ENCODE measurements at regions of chr4 and their contacts with region 1.

Region 1: DNA sequence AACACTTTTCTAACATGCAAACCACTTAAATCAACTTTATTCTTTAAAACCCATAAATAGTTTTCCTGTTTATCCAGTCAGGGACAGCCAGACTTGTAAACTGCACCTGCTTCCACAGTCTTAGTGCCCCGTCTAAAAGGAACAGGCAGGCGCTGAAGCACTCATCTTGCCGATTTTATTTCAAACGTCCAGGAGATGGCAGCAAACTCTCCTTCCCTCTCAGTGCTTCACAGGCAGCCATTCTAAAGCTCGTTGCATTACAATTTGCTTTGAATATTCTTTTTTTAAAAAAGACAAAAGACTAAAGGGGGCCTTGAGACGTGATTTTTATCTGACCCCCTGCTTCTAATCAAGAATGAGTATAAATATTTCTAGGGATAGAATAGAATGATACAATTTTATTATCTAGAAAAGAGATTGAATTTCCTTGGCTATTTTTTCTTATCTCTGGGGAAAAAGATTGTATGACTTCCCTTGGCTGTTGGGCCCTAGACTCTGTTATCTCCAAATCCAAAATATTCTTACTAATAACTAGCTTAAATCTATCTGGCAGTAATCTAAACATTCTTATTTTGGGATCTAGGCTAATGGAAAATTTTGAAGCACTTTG is 93.6 kb upstream of the MYOZ2 start:
- DNase-seq: peak; percentile 50 to 62
- ATAC-seq: peak; percentile 93

Region 2: DNA sequence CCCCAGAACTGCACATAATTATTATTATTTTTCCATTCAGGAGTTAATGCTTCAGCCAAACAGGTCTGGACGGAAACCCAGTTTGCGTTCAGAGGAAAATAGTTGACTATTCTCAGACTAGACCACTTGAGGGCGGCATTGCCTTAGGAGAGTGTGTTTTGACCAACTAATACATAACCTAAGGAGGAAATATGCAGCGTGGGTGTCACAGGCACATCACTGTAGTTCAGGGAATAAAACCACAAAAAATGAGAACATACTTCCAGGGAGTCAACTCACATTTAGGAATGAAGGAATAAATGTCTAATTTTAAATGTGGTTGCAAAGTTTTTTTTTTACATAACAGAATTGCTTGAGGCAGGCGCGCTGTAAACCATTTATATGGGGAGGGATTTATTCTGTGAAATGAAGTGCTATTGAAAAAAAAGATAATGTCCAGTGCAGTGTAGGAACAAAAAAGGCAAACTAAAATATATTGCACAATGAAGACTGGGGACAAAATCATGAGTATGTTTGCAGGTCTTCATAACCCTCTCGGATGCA is 60.1 kb before region 1 on chr4:
- intact Hi-C with region 1: loop called in 1 of 2 experiments (anchors 10 kb)
- DNase-seq: peak; percentile 53 to 54
- ATAC-seq: peak; percentile 98

Region 3: DNA sequence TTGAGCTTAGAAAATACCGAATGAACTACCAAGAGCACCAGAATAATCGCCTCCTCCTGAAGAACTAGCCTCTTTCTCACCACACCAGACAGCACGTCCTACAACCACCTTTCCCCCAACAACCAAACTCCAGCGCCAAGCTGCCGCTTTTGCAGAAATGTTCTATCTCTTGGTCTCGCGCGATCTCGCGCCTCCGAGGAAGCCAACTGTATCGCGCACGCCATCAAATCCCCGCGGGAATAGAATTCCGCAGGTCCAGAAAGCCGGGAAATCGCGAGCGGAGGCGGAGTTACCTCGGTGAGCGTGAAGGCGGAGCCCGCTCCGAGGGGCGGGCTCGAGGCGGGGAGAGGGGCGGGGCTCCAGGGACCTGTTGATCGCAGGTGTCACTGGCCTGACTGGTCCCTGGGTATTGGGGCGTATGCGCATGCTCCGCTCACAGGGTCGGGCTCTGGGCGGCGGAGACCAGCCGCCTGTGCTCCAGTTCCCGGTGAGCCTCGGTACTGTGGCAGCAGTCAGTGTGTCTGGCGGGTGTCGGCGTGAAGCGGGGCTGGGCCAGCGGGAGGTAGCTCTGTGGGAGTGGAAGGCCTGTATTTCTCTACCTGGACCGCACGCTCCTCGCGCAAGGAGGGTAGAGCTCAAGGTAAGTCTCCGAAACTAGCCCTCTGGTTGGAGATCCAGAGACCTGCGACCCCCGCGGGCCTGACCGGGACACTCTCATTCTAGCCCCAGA is 170.3 kb after region 1 on chr4 and contains the start of gene USP53:
- intact Hi-C with region 1: loop called in 1 of 2 experiments (anchors 10 kb)
- DNase-seq: peak; percentile 98 to 99
- ATAC-seq: peak; percentile 90
- total RNA-seq, gene USP53: 67.0 to 89.0 TPM

Region 4: GRCh38 chr4:119284876-119285780 is 243.1 kb after region 1 on chr4:
- intact Hi-C with region 1: loop called in 1 of 2 experiments (anchors 5 kb)
- DNase-seq: no peak
- ATAC-seq: peak; percentile 56

Region 5: GRCh38 chr4:119692001-119692400 is 649.9 kb after region 1 on chr4:
- intact Hi-C with region 1: no loop called
- DNase-seq: no peak
- ATAC-seq: no peak

Measured in left colon (tissue), 2 donors.